Thyroid gland (tissue), 4 donors: ENCODE measurements at regions of chr2 and their contacts with region 1.

Region 1: DNA sequence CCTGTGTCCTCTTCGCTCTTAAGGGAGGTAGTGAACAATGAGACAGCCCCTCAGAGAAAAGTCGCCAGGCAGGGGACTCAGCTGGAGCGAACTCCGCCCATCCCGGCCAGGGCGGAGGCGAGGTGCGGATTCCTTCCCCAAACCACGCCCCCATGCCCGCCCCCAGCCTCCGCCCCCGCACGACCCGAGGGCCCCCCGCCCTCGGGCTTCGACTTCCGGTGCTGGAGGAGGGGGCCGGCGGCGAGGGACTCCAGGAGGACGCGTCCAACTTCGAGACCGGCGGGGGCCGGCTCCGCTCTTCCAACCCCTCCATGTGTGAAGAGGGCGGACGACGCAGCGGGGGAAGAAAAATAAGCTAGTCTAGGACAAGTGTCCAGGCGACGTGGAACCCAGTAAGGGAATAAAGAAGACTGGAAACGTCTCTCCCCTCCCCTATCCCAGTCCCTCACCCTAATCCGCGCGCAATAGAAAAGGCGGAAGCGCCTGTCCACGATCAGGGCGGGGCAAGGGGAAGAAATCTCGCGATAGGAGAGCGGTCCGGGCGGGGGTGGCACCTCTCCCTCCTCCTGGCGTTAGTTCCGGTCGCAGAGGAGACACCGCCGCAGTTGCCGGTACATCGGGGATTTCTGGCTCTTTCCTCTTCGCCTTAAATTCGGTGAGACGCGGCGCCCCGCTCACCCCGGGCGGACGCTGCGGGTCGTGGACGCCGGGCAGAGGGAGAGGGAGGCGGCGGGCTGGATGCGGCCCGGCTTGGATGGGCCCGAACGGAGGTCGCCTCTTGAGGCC is at the start of gene BZW1:
- DNase-seq: peak; percentile 94 to 97
- H3K4me3 ChIP-seq: peak within 1 kb of the TSS; percentile 92 to 99 (median 96)
- H3K27ac ChIP-seq: peak within 1 kb of the TSS; percentile 92 to 97 (median 97)
- H3K4me1 ChIP-seq: peaks cover 19 to 23% of the 10 kb centered on the region in 2 donors
- H3K27me3 ChIP-seq: no peaks in the 10 kb centered on the region
- CTCF ChIP-seq: no peak
- POLR2A ChIP-seq: peak; percentile 63 to 93
- total RNA-seq, gene BZW1: 136 to 192 (median 144) TPM

Region 2: GRCh38 chr2:200713003-200713703 is 98.4 kb before region 1 on chr2:
- intact Hi-C with region 1: loop called (anchors 5 kb)
- DNase-seq: peak; percentile 73 to 79
- H3K4me3 ChIP-seq: peak overlapping the region in 1 of 3 donors; percentile 8
- H3K27ac ChIP-seq: peak overlapping the region; percentile 11 to 43 (median 30)
- H3K4me1 ChIP-seq: peaks cover 0 to 4% of the 10 kb centered on the region in 2 donors
- H3K27me3 ChIP-seq: no peaks in the 10 kb centered on the region
- CTCF ChIP-seq: peak; percentile 25 to 82 (median 78)
- POLR2A ChIP-seq: peak in 1 of 2 donors; percentile 76

Region 3: GRCh38 chr2:200864176-200864976 is 52.8 kb after region 1 on chr2 and contains the start of gene CLK1:
- intact Hi-C with region 1: loop called (anchors 5 kb)
- DNase-seq: peak; percentile 96 to 99
- H3K4me3 ChIP-seq: peak within 1 kb of the TSS; percentile 77 to 90 (median 78)
- H3K27ac ChIP-seq: peak within 1 kb of the TSS; percentile 100
- H3K4me1 ChIP-seq: peaks cover 21 to 23% of the 10 kb centered on the region in 2 donors
- H3K27me3 ChIP-seq: no peaks in the 10 kb centered on the region
- CTCF ChIP-seq: peak in 1 of 6 experiments; percentile 5
- POLR2A ChIP-seq: peak; percentile 87 to 100
- total RNA-seq, gene CLK1: 102 to 262 (median 191) TPM

Region 4: DNA sequence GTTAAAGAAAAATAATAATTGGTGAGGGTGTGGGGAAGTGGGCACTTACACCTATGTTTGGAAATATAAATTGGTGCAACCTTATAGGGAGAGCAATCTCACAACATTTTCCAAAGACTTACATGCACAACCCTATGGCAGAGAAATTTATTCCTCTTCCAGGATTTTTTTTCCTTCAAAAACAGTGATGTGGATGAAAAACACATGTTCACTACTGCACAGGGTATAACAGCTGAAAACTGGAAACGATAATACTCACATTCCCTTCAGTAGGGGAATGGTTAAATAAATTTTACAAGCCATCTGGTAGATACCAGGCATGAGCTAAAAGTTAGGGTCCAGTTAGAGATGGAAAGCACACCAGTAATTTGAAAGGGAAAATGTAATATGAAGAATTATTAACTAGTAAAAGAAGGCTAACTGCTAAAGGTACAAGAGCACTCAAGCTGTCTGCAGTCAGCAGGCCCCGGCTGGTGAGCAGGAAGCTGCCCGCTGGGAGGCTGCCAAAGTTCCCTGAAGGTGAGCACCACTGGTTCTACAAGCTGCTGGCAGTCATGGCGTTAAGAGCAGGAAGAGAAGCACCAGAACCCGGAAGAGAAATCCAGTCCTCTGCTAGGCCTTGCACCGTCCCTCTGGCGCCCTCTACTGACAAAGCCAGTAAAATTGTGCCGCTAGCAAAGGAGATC is 420.4 kb after region 1 on chr2:
- intact Hi-C with region 1: no loop called
- DNase-seq: peak; percentile 100
- H3K4me3 ChIP-seq: no peak overlapping the region
- H3K27ac ChIP-seq: peak overlapping the region in 2 of 3 donors; percentile 47 to 68
- H3K4me1 ChIP-seq: peaks cover 8% of the 10 kb centered on the region in 2 donors
- H3K27me3 ChIP-seq: no peaks in the 10 kb centered on the region
- CTCF ChIP-seq: peak; percentile 90 to 97 (median 95)
- POLR2A ChIP-seq: no peak